ENCODE measurements at regions of chr14 and their contacts with region 1.

Region 1: DNA sequence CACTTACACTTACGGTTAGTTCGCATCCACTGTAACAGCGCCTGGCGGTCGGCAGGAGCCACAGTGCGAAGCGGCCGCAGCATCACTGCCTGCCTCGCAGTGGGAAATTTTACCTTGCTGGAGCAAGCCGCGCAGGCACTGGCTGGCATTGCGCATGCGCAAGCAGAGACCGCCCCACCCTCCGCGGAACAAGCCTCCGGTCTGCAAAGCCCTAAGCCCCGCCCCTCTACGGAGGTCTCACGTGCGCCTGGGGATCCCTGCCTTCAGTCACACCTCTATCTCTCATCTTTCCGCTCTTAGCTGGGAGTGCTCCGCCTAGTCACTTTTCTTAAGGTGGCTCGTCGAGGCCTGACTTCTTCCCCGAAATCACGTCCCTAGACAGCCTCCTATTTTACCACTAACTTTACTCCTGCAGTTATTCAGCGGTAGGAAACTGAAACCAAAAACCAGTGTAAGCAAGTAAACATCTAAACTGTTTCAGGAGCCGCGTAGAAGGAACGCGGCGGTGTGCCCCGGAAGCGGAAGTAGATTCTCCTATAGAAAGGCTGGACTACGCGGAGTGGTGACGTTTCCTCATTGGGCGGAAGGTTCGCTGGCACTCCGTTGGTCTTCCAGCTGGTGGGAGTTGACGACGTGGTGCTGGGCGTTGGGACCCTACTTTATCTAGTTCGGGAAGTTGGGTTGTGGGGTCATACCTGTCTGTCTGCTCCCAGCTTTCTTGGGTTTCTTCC is at the start of gene SRP54:
- DNase-seq: peak; percentile 98 to 99
- ATAC-seq: peak; percentile 98 to 99
- H3K4me3 ChIP-seq: peak within 1 kb of the TSS; percentile 79 to 90 (median 80)
- H3K27ac ChIP-seq: peak within 1 kb of the TSS; percentile 83 to 95 (median 93)
- H3K4me1 ChIP-seq: peaks cover 28 to 36% of the 10 kb centered on the region in 2 donors
- H3K27me3 ChIP-seq: no peaks in the 10 kb centered on the region
- CTCF ChIP-seq: peak in 1 of 5 experiments; percentile 24
- POLR2A ChIP-seq: peak; percentile 74 to 86
- total RNA-seq, gene SRP54: 33.7 to 40.0 (median 34.6) TPM

Region 2: DNA sequence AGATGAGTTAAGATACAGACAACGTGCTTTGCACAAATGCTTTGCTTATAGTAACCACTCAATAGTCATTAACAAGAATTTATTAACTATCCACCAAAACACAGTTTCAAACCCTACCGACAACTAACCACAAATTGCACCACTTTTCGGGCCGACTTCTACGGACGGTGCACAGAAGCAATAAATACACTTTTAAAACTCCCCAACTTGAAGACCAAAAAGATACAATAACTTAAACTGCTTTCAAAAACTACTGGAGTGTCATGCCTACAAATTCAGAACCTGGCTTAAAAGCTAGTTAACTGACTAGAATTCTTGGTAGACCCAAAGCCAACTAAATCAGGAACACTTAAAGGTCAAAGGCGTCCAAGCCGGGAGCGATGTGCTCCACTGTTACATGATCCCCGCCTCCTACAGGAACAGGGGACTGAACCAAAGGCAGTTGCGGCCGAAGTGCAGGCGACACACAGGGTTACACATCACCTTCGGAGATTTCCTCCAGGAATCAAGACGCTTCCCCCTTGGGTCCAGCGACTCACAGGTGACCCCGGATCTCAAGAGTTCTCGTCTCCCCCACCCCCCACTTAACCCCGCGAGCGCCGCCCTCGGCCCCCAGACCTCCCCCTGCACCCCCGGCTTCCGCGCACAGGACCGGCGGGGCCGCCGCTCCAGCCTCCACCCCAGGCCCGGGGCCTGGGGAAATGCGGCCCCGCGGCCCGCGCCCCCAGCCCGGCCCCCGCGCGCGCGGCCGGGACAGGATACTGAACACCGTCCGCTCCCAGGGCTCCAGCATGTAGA is 521.0 kb before region 1 on chr14:
- in situ Hi-C with region 1: no loop called
- intact Hi-C with region 1: loop called (anchors 10 kb)
- DNase-seq: peak; percentile 37 to 66
- ATAC-seq: peak; percentile 73 to 78
- H3K4me3 ChIP-seq: peak overlapping the region; percentile 53 to 73 (median 62)
- H3K27ac ChIP-seq: peak overlapping the region; percentile 89 to 91 (median 90)
- H3K4me1 ChIP-seq: peaks cover 12 to 21% of the 10 kb centered on the region in 2 donors
- H3K27me3 ChIP-seq: no peaks in the 10 kb centered on the region
- CTCF ChIP-seq: no peak
- POLR2A ChIP-seq: no peak

Region 3: DNA sequence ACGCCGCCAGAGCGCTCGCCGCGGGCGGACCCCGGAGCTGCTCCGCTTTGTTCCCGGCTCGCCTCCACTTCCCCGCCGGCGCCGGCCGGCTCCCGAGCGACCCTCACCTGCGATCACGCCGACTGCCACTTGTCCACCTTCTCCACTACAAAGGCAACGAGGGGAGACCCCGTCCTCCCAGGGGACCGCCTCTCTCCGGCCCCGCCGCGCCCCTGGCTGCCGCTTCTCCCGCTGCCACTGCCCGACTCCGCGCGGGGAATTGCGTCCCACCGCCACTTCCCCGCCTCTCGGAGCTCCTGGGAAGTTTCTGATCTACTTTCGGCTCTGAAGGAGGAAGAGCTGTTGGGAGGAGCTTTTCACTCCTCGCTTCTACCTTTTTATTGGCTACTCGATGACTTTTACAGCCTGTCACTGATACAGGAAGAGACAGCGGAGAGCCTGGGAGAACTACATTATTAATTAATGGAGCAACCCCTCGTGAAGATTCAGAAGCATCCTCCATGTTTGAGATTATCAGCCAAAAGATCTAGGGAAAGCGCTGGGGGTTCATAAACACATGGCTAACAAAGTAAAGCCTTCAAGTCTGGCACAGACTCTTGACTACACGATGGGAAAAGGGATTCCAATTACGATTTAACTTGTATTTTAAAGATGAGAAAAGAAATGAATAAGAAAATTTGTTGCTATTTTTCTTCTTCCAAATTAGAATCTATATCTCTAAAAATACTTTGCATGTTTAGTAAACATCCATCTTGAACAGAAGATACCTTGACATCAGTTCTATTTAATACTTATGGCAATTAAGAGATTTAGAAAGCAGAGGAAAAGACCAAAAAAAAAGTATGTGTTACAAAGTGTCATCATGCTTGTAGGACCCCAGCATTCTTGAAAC is 107.3 kb before region 1 on chr14 and contains the start of gene BAZ1A:
- in situ Hi-C with region 1: no loop called
- intact Hi-C with region 1: loop called (anchors 2 kb)
- DNase-seq: peak; percentile 42 to 61
- ATAC-seq: peak; percentile 62
- H3K4me3 ChIP-seq: peak within 1 kb of the TSS; percentile 82 to 98 (median 90)
- H3K27ac ChIP-seq: peak within 1 kb of the TSS; percentile 98 to 100 (median 100)
- H3K4me1 ChIP-seq: peaks cover 16 to 17% of the 10 kb centered on the region in 2 donors
- H3K27me3 ChIP-seq: no peaks in the 10 kb centered on the region
- CTCF ChIP-seq: peak in 3 of 5 experiments; percentile 13 to 42 (median 37)
- POLR2A ChIP-seq: peak; percentile 84 to 95
- total RNA-seq, gene BAZ1A: 11.6 to 18.5 (median 14.7) TPM

Region 4: DNA sequence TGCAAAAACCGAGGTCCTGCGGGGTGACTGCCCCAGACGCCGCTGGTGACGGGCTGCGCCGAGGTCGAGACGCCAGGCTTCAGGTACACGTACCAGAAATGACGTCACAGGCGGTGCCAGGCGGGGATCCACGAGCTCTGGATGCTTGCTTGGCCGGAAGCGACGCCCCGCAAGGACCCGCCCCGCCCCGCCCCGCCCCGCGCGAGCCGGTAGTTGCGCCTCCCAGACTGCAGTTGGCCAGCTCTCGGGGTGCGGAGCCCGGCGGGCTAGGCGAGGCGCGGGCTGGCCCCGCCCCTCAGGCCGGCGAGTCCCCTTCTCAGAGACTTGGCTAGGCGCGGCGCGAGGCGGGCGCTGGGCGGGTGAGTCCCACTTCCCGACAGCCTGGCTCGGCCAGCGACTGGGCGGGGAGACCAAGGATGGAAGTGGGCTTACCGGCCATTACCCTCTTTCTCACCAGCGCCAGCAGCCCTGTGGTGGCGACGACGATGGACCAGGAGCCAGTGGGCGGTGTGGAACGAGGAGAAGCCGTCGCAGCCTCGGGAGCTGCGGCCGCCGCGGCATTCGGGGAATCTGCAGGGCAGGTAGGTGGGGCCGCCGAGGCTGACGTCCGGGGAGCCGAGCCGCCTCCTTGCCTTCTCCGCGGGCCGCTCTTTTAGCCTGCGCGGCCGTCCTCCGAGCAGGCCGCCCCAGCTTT is 63.6 kb after region 1 on chr14 and contains the start of gene FAM177A1:
- in situ Hi-C with region 1: no loop called
- intact Hi-C with region 1: loop called (anchors 1 kb)
- DNase-seq: peak; percentile 95 to 97
- ATAC-seq: peak; percentile 81 to 90
- H3K4me3 ChIP-seq: peak within 1 kb of the TSS; percentile 77 to 94 (median 88)
- H3K27ac ChIP-seq: peak within 1 kb of the TSS; percentile 90 to 98 (median 94)
- H3K4me1 ChIP-seq: peaks cover 37 to 40% of the 10 kb centered on the region in 2 donors
- H3K27me3 ChIP-seq: no peaks in the 10 kb centered on the region
- CTCF ChIP-seq: no peak
- POLR2A ChIP-seq: peak; percentile 91 to 94
- total RNA-seq, gene FAM177A1: 13.5 to 35.8 (median 21.8) TPM

Region 5: GRCh38 chr14:35808076-35808652 is 825.6 kb after region 1 on chr14:
- in situ Hi-C with region 1: no loop called
- intact Hi-C with region 1: loop called (anchors 10 kb)
- DNase-seq: peak in 1 of 2 donors; percentile 14
- ATAC-seq: peak; percentile 34 to 59
- H3K4me3 ChIP-seq: peak overlapping the region; percentile 56 to 89 (median 74)
- H3K27ac ChIP-seq: peak overlapping the region; percentile 85 to 94 (median 88)
- H3K4me1 ChIP-seq: peaks cover 20 to 22% of the 10 kb centered on the region in 2 donors
- H3K27me3 ChIP-seq: no peaks in the 10 kb centered on the region
- CTCF ChIP-seq: no peak
- POLR2A ChIP-seq: no peak

Measured in gastrocnemius medialis (tissue), 4 donors.